OCI-LY7 (cell line): ENCODE measurements at regions of chr1 and their contacts with region 1.

Region 1: DNA sequence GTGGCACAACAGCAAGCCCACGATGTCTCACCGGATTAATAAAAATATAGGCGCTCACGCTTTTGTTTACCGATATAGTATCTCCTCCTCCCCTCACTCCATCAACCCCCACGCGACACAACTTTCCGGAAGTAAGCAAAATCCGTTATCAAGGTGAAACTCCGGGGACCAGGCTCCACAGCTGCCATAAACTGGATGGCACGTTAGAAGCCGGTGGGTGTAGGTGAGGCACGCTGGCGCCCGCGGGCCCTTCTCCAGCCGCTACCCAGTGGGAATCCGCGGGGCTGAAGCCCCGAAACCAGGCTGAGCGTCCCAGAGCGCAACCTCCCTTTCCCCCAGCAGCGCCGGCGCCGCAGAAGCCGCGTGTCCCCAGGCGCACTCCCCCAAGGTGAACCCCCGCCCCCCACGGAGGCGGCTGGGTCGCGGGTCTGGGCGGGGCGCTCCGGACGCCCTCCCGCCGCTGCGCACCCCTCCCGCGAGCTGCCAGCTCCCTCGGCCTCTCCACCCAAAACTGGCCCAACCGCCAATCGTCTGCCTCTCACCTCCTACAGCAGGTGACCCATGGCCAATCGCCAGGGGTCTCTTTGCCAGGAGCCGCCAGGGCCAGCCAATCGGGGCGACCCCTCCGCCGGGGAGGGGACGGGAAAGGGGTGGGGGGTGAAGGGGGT is 112.4 kb downstream of the OSBPL9 start:
- DNase-seq: peak; percentile 98
- H3K4me3 ChIP-seq: peak overlapping the region; percentile 83
- H3K27ac ChIP-seq: peak overlapping the region; percentile 67
- H3K4me1 ChIP-seq: peaks cover 48% of the 10 kb centered on the region
- CTCF ChIP-seq: no peak

Region 2: DNA sequence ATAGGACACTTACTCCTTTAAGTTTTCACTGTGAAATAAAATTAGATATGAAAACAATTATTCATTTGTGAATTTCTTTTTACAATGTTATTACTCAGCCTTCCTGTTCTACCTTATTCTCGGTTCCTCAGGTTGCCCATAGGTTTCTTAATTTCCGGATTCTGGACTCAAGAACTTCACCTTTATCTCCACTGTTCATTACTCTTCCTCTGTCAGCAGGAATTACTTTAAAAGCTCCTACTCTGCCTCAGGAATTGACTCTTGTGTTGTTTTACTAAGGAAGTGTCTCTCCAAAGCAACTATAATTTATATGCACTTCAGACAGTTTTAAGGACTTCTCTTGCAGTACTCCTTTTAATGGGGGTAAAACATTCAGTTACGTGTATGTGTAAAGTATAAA is 11.4 kb after region 1 on chr1:
- CTCF ChIA-PET with region 1: no interaction called
- POLR2A ChIA-PET with region 1: interaction called, 12 read pairs
- intact Hi-C with region 1: no loop called
- DNase-seq: no peak
- H3K4me3 ChIP-seq: no peak overlapping the region
- H3K27ac ChIP-seq: no peak overlapping the region
- H3K4me1 ChIP-seq: peaks cover 22% of the 10 kb centered on the region
- CTCF ChIP-seq: no peak